K562 (cell line): ENCODE measurements at regions of chr6 and their contacts with region 1.

Region 1: GRCh38 chr6:140921366-140922226 is 1211.1 kb upstream of the GJE1 start:
- DNase-seq: peak; percentile 10 to 33 (median 18)
- ATAC-seq: peak; percentile 87
- H3K4me3 ChIP-seq: no peak overlapping the region
- H3K27ac ChIP-seq: no peak overlapping the region
- H3K4me1 ChIP-seq: no peaks in the 10 kb centered on the region
- H3K27me3 ChIP-seq: no peaks in the 10 kb centered on the region
- CTCF ChIP-seq: peak; percentile 17 to 70 (median 56); a peak in 5 of 6 replicates
- EP300 ChIP-seq: no peak
- POLR2A ChIP-seq: no peak
- RAD21 ChIP-seq: peak; percentile 78 to 95

Region 2: GRCh38 chr6:139369568-139370282 is 1551.9 kb before region 1 on chr6:
- CTCF ChIA-PET with region 1: no interaction called
- POLR2A ChIA-PET with region 1: no interaction called
- in situ Hi-C with region 1: no loop called
- intact Hi-C with region 1: loop called (anchors 5 kb)
- DNase-seq: peak in 2 of 4 experiments; percentile 59 to 64
- ATAC-seq: no peak
- H3K4me3 ChIP-seq: no peak overlapping the region
- H3K27ac ChIP-seq: peak overlapping the region; percentile 5; the same call in 2 of the 3 replicates
- H3K4me1 ChIP-seq: peaks cover 18 to 24% of the 10 kb centered on the region in 2 experiments
- H3K27me3 ChIP-seq: no peaks in the 10 kb centered on the region
- CTCF ChIP-seq: peak; percentile 66 to 87 (median 76)
- EP300 ChIP-seq: no peak
- POLR2A ChIP-seq: no peak
- RAD21 ChIP-seq: peak; percentile 94 to 97

Region 3: GRCh38 chr6:140039364-140039763 is 882.2 kb before region 1 on chr6:
- CTCF ChIA-PET with region 1: no interaction called
- POLR2A ChIA-PET with region 1: no interaction called
- in situ Hi-C with region 1: no loop called
- intact Hi-C with region 1: loop called (anchors 10 kb)
- DNase-seq: no peak
- ATAC-seq: no peak
- H3K4me3 ChIP-seq: no peak overlapping the region
- H3K27ac ChIP-seq: no peak overlapping the region
- H3K4me1 ChIP-seq: no peaks in the 10 kb centered on the region
- H3K27me3 ChIP-seq: no peaks in the 10 kb centered on the region
- CTCF ChIP-seq: no peak
- EP300 ChIP-seq: no peak
- POLR2A ChIP-seq: no peak
- RAD21 ChIP-seq: no peak

Region 4: DNA sequence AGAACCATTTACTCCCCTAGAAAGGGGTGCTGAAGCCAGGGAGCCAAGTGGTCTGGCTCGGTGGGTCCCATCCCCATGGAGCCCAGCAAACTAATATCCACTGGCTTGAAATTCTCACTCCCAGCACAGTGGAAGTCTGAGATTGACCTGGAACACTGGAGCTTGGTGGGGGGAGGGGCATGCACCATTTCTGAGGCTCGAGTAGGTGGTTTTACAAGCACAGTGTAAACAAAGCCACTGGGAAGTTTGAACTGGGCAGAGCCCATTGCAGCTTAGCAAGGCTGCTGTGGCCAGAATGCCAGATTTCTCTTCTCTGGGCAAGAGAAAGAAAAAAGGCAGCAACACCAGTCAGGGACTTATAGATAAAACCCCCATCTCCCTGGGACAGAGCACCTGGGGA is 691.3 kb before region 1 on chr6:
- CTCF ChIA-PET with region 1: no interaction called
- POLR2A ChIA-PET with region 1: no interaction called
- in situ Hi-C with region 1: no loop called
- intact Hi-C with region 1: no loop called
- DNase-seq: no peak
- ATAC-seq: no peak
- H3K4me3 ChIP-seq: no peak overlapping the region
- H3K27ac ChIP-seq: no peak overlapping the region
- H3K4me1 ChIP-seq: no peaks in the 10 kb centered on the region
- H3K27me3 ChIP-seq: no peaks in the 10 kb centered on the region
- CTCF ChIP-seq: no peak
- EP300 ChIP-seq: no peak
- POLR2A ChIP-seq: no peak
- RAD21 ChIP-seq: no peak

Region 5: GRCh38 chr6:140697585-140697984 is 224.0 kb before region 1 on chr6:
- CTCF ChIA-PET with region 1: no interaction called
- POLR2A ChIA-PET with region 1: no interaction called
- in situ Hi-C with region 1: no loop called
- intact Hi-C with region 1: no loop called
- DNase-seq: no peak
- ATAC-seq: no peak
- H3K4me3 ChIP-seq: no peak overlapping the region
- H3K27ac ChIP-seq: no peak overlapping the region
- H3K4me1 ChIP-seq: no peaks in the 10 kb centered on the region
- H3K27me3 ChIP-seq: no peaks in the 10 kb centered on the region
- CTCF ChIP-seq: no peak
- EP300 ChIP-seq: no peak
- POLR2A ChIP-seq: no peak
- RAD21 ChIP-seq: no peak